Activated naive CD4-positive, alpha-beta T cell treated with anti-CD3 and anti-CD28 coated beads, Interleukin-2, amount 10 ng/mL, durations not matched to agents 7 days and 5 days (primary cell): ENCODE measurements at regions of chr20 and their contacts with region 1.

Region 1: GRCh38 chr20:36835453-36836198 is 40.3 kb upstream of the TLDC2 start:
- DNase-seq: peak; percentile 94
- H3K4me3 Mint-ChIP-seq: peak overlapping the region; percentile 78
- H3K27ac Mint-ChIP-seq: peak overlapping the region; percentile 85
- H3K4me1 Mint-ChIP-seq: peaks cover 33% of the 10 kb centered on the region
- H3K27me3 Mint-ChIP-seq: no peaks in the 10 kb centered on the region

Region 2: GRCh38 chr20:36728986-36729385 is 106.6 kb before region 1 on chr20:
- CTCF ChIA-PET with region 1: no interaction called
- DNase-seq: no peak
- H3K4me3 Mint-ChIP-seq: no peak overlapping the region
- H3K27ac Mint-ChIP-seq: no peak overlapping the region
- H3K4me1 Mint-ChIP-seq: peaks cover 27% of the 10 kb centered on the region
- H3K27me3 Mint-ChIP-seq: no peaks in the 10 kb centered on the region

Region 3: DNA sequence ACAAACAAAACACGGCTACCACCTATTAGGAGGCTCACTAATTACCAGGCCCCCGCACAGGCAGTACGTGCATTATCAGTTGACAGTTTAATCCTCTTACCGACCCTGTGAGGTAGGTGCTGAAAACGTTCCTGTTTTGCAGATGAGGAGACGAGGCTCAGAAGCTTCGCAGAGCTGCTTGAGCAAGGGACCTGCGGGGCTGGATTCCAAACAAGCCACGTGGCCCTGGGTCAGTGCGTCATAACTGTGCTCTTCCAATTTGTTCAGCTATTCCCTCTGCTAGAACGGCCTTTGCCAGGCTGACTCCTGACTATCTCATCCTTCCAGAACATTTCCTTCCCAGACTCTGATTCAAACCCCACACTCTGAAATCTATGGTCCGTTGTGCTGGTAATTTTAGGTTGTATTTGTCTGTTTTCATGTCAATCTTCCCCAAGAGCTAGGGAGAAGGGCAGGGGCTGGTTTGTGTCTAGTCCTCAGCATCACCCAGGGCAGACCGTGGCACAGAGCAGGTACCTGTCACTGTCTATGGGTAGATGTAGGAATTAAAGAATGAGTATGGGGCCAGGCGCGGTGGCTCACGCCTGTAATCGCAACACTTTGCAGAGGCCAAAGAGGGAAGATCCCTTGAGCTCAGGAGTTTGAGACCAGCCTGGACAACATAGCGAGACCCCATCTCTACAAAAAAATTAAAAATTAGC is 11.5 kb after region 1 on chr20:
- CTCF ChIA-PET with region 1: interaction called, 30 read pairs
- DNase-seq: no peak
- H3K4me3 Mint-ChIP-seq: no peak overlapping the region
- H3K27ac Mint-ChIP-seq: no peak overlapping the region
- H3K4me1 Mint-ChIP-seq: peaks cover 16% of the 10 kb centered on the region
- H3K27me3 Mint-ChIP-seq: peaks cover 21% of the 10 kb centered on the region

Region 4: GRCh38 chr20:36856691-36857635 is 21.3 kb after region 1 on chr20:
- CTCF ChIA-PET with region 1: interaction called, 19 read pairs
- DNase-seq: peak; percentile 79
- H3K4me3 Mint-ChIP-seq: no peak overlapping the region
- H3K27ac Mint-ChIP-seq: peak overlapping the region; percentile 42
- H3K4me1 Mint-ChIP-seq: peaks cover 19% of the 10 kb centered on the region
- H3K27me3 Mint-ChIP-seq: peaks cover 29% of the 10 kb centered on the region

Region 5: GRCh38 chr20:38406476-38406875 is 1570.8 kb after region 1 on chr20:
- CTCF ChIA-PET with region 1: no interaction called
- DNase-seq: no peak
- H3K4me3 Mint-ChIP-seq: no peak overlapping the region
- H3K27ac Mint-ChIP-seq: no peak overlapping the region
- H3K4me1 Mint-ChIP-seq: no peaks in the 10 kb centered on the region
- H3K27me3 Mint-ChIP-seq: no peaks in the 10 kb centered on the region